PC-3 (cell line): ENCODE measurements at regions of chr2 and their contacts with region 1.

Region 1: DNA sequence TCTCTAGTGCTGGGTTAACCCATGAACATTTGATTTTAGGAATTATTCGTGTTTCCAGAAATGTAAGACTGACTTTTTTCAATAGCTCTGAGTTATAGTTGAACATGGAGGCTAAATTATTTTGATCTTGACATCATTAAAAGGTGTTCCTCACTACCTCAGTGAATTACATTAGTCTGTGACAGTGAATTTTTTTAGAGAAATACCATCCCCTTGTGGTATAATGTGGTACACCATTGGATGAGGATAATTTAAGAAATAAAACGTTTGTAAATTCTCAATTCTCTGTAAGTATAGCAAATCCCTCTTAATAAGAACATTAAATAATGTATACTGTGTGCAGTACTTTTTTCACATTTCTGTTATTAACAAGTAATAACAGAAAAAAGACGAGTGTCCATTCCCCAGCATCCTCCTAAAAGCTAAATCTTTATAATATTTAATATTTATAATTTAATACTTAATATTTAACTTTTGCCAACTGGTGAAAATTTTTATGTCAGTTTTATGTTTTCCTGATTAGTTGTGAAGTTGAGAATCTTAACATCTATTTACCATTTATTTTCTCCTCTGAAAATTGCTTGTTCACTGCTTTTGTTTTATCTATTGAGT is 70.3 kb upstream of the CWC22 start:
- DNase-seq: peak; percentile 61
- ATAC-seq: peak; percentile 56
- H3K4me3 ChIP-seq: no peak overlapping the region
- H3K27ac ChIP-seq: no peak overlapping the region
- H3K4me1 ChIP-seq: 0 out of 2 replicates have a peak, but pooled peaks cover 7% of the 10 kb centered on the region
- H3K27me3 ChIP-seq: no peaks in the 10 kb centered on the region
- CTCF ChIP-seq: peak; percentile 89

Region 2: GRCh38 chr2:179422037-179422643 is 655.3 kb before region 1 on chr2:
- CTCF ChIA-PET with region 1: no interaction called
- POLR2A ChIA-PET with region 1: no interaction called
- intact Hi-C with region 1: loop called (anchors 2 kb)
- DNase-seq: peak; percentile 84
- ATAC-seq: peak; percentile 88
- H3K4me3 ChIP-seq: no peak overlapping the region
- H3K27ac ChIP-seq: no peak overlapping the region
- H3K4me1 ChIP-seq: no peaks in the 10 kb centered on the region
- H3K27me3 ChIP-seq: no peaks in the 10 kb centered on the region
- CTCF ChIP-seq: peak; percentile 78

Region 3: GRCh38 chr2:179842498-179843153 is 234.8 kb before region 1 on chr2:
- CTCF ChIA-PET with region 1: no interaction called
- POLR2A ChIA-PET with region 1: no interaction called
- intact Hi-C with region 1: loop called (anchors 1 kb)
- DNase-seq: peak; percentile 24
- ATAC-seq: no peak
- H3K4me3 ChIP-seq: no peak overlapping the region
- H3K27ac ChIP-seq: no peak overlapping the region
- H3K4me1 ChIP-seq: peaks cover 3% of the 10 kb centered on the region; the same call in 1 of the 2 replicates
- H3K27me3 ChIP-seq: no peaks in the 10 kb centered on the region
- CTCF ChIP-seq: peak; percentile 58

Region 4: DNA sequence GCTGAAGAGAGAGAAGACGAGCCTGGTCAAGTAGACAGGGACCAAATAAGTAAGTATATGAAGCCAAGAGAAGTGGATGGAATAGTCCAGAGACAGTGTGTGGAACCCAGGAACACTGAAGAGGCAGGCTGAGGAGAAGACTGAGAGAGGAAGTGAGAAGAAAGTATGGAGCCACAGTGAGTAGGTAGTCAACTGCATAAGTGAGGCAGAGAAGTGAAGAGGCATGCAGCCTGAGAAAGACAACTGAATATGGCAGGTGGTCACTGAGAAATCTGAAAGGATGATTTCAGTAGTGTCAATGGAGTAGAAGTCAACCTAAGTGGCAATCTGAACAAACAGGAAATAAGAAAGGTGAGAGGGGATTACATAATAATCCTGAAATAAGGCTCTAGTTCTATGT is 125.7 kb before region 1 on chr2:
- CTCF ChIA-PET with region 1: no interaction called
- POLR2A ChIA-PET with region 1: no interaction called
- intact Hi-C with region 1: loop called (anchors 5 kb)
- DNase-seq: no peak
- ATAC-seq: no peak
- H3K4me3 ChIP-seq: no peak overlapping the region
- H3K27ac ChIP-seq: no peak overlapping the region
- H3K4me1 ChIP-seq: peaks cover 15% of the 10 kb centered on the region
- H3K27me3 ChIP-seq: no peaks in the 10 kb centered on the region
- CTCF ChIP-seq: no peak

Region 5: GRCh38 chr2:179991344-179991743 is 86.1 kb before region 1 on chr2:
- CTCF ChIA-PET with region 1: no interaction called
- POLR2A ChIA-PET with region 1: no interaction called
- intact Hi-C with region 1: loop called (anchors 5 kb)
- DNase-seq: peak; percentile 21
- ATAC-seq: peak; percentile 48
- H3K4me3 ChIP-seq: no peak overlapping the region
- H3K27ac ChIP-seq: no peak overlapping the region
- H3K4me1 ChIP-seq: no peaks in the 10 kb centered on the region
- H3K27me3 ChIP-seq: no peaks in the 10 kb centered on the region
- CTCF ChIP-seq: peak; percentile 50

Region 6: DNA sequence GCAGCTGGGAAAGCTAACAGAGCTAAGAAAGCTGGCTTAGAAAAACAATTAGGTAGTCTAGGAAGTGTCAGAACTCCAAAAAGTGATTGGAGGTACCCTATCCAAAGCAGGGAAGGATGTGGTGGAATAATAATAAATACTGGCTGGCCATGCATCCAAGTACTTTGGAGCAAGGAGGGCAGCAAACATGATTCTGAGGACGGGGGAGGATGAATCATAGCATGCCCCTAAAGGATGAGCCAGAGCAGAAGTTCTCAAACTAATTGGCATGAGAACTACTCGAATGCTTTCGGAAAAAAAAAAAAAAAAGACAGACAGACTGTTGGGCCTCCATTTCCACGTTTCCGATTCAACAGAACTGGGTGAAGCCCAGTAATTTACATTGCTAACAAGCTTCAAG is 72.7 kb before region 1 on chr2:
- CTCF ChIA-PET with region 1: no interaction called
- POLR2A ChIA-PET with region 1: interaction called, 10 read pairs
- intact Hi-C with region 1: no loop called
- DNase-seq: no peak
- ATAC-seq: no peak
- H3K4me3 ChIP-seq: no peak overlapping the region
- H3K27ac ChIP-seq: no peak overlapping the region
- H3K4me1 ChIP-seq: peaks cover 26% of the 10 kb centered on the region
- H3K27me3 ChIP-seq: no peaks in the 10 kb centered on the region
- CTCF ChIP-seq: no peak